Caco-2 (cell line): ENCODE measurements at regions of chr4 and their contacts with region 1.

Region 1: DNA sequence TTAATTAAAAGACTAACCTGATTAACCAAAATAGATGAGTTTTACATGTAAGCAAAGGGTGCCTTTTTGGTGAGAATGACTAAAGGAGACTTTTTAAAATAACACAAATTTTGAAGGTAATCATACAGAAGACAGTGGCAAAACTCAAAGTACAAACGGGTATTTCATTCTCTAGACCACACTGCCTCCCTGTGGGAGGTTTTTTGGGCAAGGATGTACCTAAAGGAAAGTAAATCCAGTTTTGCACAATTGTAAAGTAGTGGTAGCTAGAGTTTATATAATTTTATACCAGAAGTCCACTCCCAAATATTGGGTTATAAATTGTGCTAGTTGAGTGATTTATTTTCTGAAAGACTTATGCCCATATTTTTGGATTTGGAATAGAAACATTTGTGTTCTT is 201.0 kb downstream of the PAPSS1 start:
- DNase-seq: peak in 1 of 2 experiments; percentile 29
- H3K4me3 ChIP-seq: no peak overlapping the region
- H3K4me3 Mint-ChIP-seq: no peak overlapping the region
- H3K27ac Mint-ChIP-seq: no peak overlapping the region
- H3K4me1 ChIP-seq: no peaks in the 10 kb centered on the region
- H3K4me1 Mint-ChIP-seq: no peaks in the 10 kb centered on the region
- H3K27me3 ChIP-seq: no peaks in the 10 kb centered on the region
- H3K27me3 Mint-ChIP-seq: no peaks in the 10 kb centered on the region
- CTCF ChIP-seq: peak; percentile 35 to 56

Region 2: DNA sequence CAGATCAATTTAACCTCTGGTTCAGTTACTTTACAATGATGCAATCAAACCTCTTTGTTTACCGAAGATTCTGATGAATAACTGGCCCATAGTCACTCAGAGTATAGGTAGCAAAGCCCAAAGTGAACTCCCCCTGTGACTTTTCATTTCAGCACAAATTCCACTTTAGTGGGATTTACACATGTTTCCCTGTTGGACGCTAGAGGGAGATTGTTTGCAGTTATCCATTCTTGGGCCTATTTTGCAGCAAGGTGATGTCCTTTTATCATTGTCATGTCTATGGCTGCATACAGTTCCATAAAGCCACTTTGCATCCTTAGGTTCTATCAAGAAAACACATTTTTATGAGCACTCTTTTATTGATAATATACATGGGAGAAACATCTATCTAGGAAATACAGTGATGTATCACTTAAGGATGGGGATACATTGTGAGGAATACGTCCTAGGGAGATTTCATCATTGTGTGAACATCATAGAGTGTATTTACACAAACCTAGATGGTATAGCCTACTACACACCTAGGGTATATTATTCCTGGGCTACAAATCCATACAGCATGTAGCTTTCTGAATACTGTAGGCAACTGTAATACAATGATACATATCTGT is 468.4 kb before region 1 on chr4:
- CTCF ChIA-PET with region 1: interaction called, 5 read pairs
- POLR2A ChIA-PET with region 1: no interaction called
- intact Hi-C with region 1: loop called (anchors 1 kb)
- DNase-seq: peak in 1 of 2 experiments; percentile 11
- H3K4me3 ChIP-seq: no peak overlapping the region
- H3K4me3 Mint-ChIP-seq: no peak overlapping the region
- H3K27ac Mint-ChIP-seq: no peak overlapping the region
- H3K4me1 ChIP-seq: no peaks in the 10 kb centered on the region
- H3K4me1 Mint-ChIP-seq: no peaks in the 10 kb centered on the region
- H3K27me3 ChIP-seq: no peaks in the 10 kb centered on the region
- H3K27me3 Mint-ChIP-seq: no peaks in the 10 kb centered on the region
- CTCF ChIP-seq: peak; percentile 41 to 63

Region 3: GRCh38 chr4:107482521-107482920 is 36.5 kb before region 1 on chr4:
- CTCF ChIA-PET with region 1: no interaction called
- POLR2A ChIA-PET with region 1: no interaction called
- intact Hi-C with region 1: no loop called
- DNase-seq: no peak
- H3K4me3 ChIP-seq: no peak overlapping the region
- H3K4me3 Mint-ChIP-seq: no peak overlapping the region
- H3K27ac Mint-ChIP-seq: no peak overlapping the region
- H3K4me1 ChIP-seq: no peaks in the 10 kb centered on the region
- H3K4me1 Mint-ChIP-seq: no peaks in the 10 kb centered on the region
- H3K27me3 ChIP-seq: no peaks in the 10 kb centered on the region
- H3K27me3 Mint-ChIP-seq: peaks cover 2% of the 10 kb centered on the region
- CTCF ChIP-seq: no peak